Activated CD4-positive, alpha-beta T cell treated with anti-CD3 and anti-CD28 coated beads for 36 hours (primary cell): ENCODE measurements at regions of chr6 and their contacts with region 1.

Region 1: DNA sequence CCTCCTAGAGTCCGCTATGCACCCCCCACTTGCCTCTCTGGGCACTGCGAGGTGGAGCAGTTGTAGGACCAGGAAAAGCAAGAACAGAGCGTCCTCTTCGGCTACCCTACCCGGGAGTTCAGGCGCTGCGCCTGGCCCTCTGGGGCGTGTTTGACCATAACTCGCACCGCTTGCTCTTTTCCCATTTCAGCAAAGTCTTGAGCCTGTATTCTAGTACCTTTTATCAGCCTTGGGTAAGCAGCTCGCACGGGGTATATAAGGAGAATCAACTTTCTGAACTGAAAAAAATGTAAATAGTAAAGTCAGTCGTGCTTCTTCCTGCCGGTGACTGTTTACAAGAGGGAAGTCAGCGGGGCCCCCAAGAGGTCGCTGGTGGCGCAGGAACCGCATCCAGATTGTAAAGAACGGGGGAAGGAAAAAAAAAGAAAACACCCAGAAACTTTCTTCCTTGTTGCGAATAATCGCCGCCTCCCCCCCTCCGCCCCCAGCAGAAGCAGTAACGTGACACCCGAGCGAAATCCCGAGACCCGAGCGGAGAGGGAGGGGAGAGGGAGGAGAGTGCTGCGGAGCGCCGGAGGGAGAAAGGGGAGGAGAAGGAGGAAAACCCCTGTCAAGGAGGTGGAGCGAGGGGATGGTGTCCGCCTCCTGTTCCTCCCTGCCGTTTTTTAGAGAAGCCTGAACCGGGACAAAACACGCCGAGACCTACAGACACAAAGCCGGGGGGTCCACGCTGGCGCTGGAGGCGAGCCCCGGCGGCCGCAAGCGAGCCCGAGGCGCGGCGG is at the start of gene UST:
- DNase-seq: peak; percentile 79
- ATAC-seq: peak; percentile 59
- H3K4me3 Mint-ChIP-seq: peak within 1 kb of the TSS; percentile 87
- H3K27ac Mint-ChIP-seq: peak within 1 kb of the TSS; percentile 69
- H3K4me1 Mint-ChIP-seq: peaks cover 23% of the 10 kb centered on the region
- H3K27me3 Mint-ChIP-seq: peaks cover 40% of the 10 kb centered on the region
- total RNA-seq, gene UST: 2.2 to 2.8 TPM

Region 2: GRCh38 chr6:148578245-148578732 is 168.3 kb before region 1 on chr6:
- CTCF ChIA-PET with region 1: no interaction called
- POLR2A ChIA-PET with region 1: no interaction called
- intact Hi-C with region 1: loop called (anchors 5 kb)
- DNase-seq: peak; percentile 74
- ATAC-seq: peak; percentile 99
- H3K4me3 Mint-ChIP-seq: no peak overlapping the region
- H3K27ac Mint-ChIP-seq: no peak overlapping the region
- H3K4me1 Mint-ChIP-seq: peaks cover 5% of the 10 kb centered on the region
- H3K27me3 Mint-ChIP-seq: peaks cover 36% of the 10 kb centered on the region

Region 3: GRCh38 chr6:148671085-148671484 is 75.5 kb before region 1 on chr6:
- CTCF ChIA-PET with region 1: no interaction called
- POLR2A ChIA-PET with region 1: no interaction called
- intact Hi-C with region 1: no loop called
- DNase-seq: no peak
- ATAC-seq: no peak
- H3K4me3 Mint-ChIP-seq: no peak overlapping the region
- H3K27ac Mint-ChIP-seq: no peak overlapping the region
- H3K4me1 Mint-ChIP-seq: no peaks in the 10 kb centered on the region
- H3K27me3 Mint-ChIP-seq: peaks cover 3% of the 10 kb centered on the region